Caco-2 (cell line): ENCODE measurements at regions of chr11 and their contacts with region 1.

Region 1: DNA sequence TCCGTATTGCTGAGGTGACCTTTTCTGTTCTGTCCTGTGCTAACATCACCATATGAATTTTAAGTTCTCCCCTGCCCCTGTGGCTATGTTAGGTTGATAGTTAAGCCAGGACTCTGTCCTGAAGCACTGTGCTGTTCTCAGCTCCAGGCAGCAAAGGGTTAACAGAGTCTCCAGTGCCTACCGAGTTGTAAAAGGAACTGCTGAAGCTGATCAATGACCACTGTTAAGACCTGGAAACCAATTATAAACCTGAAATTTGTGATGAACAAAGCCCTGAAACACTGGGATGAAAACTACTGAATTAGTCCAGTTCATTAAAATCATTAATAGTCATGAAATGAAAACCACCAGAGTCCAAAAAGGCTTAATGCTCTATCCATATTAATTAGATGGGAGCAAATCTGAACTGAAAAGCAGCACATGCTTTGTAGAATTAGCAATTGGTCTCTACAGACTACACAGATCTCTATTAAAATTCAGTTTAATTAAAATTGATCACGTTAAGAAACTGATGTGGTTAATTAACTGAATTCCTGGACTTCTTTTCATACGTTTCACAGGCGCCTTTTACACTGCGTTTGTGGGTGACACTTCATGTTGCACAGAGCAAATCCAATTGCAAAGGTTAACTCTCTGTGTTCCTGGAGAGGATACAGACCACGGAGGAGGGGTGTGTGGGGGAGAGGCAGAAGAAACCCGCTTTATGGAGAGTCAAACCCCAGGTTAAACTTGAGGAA is 188.5 kb upstream of the MPPED2 start:
- DNase-seq: no peak
- H3K4me3 ChIP-seq: no peak overlapping the region
- H3K4me3 Mint-ChIP-seq: no peak overlapping the region
- H3K27ac Mint-ChIP-seq: no peak overlapping the region
- H3K4me1 ChIP-seq: no peaks in the 10 kb centered on the region
- H3K4me1 Mint-ChIP-seq: no peaks in the 10 kb centered on the region
- H3K27me3 ChIP-seq: no peaks in the 10 kb centered on the region
- H3K27me3 Mint-ChIP-seq: peaks cover 15% of the 10 kb centered on the region
- CTCF ChIP-seq: no peak

Region 2: DNA sequence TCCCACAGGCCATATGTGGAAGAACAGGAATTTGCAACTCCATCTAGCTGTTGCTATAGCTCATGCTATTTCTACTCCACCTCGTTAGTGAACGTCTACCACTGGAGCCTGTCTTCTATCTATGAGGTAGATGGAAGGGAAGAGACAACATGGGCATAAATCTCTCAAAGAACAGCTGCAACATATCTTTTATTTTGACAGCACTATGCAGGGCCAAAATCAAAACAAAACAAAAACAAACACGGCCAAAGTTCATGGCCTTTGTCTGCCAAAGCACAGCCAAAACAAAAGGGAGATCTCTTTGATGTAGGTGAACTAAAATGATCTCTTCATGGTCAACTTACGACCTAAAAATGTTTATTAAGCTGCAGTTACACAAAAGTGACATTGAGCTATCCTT is 26.7 kb after region 1 on chr11:
- CTCF ChIA-PET with region 1: no interaction called
- POLR2A ChIA-PET with region 1: no interaction called
- intact Hi-C with region 1: loop called (anchors 1 kb)
- DNase-seq: no peak
- H3K4me3 ChIP-seq: no peak overlapping the region
- H3K4me3 Mint-ChIP-seq: no peak overlapping the region
- H3K27ac Mint-ChIP-seq: no peak overlapping the region
- H3K4me1 ChIP-seq: no peaks in the 10 kb centered on the region
- H3K4me1 Mint-ChIP-seq: peaks cover 6% of the 10 kb centered on the region
- H3K27me3 ChIP-seq: no peaks in the 10 kb centered on the region
- H3K27me3 Mint-ChIP-seq: peaks cover 10% of the 10 kb centered on the region
- CTCF ChIP-seq: no peak